Gastrocnemius medialis (tissue), 4 donors: ENCODE measurements at regions of chr2 and their contacts with region 1.

Region 1: GRCh38 chr2:219402665-219403515 is 15.2 kb upstream of the DNPEP start:
- DNase-seq: peak; percentile 61 to 79
- ATAC-seq: peak; percentile 6 to 18
- H3K4me3 ChIP-seq: no peak overlapping the region
- H3K27ac ChIP-seq: peak overlapping the region; percentile 92 to 99 (median 98)
- H3K4me1 ChIP-seq: peaks cover 50 to 83% of the 10 kb centered on the region in 2 donors
- H3K27me3 ChIP-seq: no peaks in the 10 kb centered on the region
- CTCF ChIP-seq: peak; percentile 91 to 94 (median 93)
- POLR2A ChIP-seq: no peak

Region 2: DNA sequence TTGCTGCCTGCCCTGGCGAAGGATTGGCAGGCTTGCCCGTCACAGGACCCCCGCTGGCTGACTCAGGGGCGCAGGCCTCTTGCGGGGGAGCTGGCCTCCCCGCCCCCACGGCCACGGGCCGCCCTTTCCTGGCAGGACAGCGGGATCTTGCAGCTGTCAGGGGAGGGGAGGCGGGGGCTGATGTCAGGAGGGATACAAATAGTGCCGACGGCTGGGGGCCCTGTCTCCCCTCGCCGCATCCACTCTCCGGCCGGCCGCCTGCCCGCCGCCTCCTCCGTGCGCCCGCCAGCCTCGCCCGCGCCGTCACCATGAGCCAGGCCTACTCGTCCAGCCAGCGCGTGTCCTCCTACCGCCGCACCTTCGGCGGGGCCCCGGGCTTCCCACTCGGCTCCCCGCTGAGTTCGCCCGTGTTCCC is 15.3 kb after region 1 on chr2 and contains the start of gene DES:
- in situ Hi-C with region 1: no loop called
- intact Hi-C with region 1: loop called (anchors 1 kb)
- DNase-seq: peak; percentile 87 to 94
- ATAC-seq: peak; percentile 47 to 55
- H3K4me3 ChIP-seq: peak within 1 kb of the TSS; percentile 75 to 95 (median 83)
- H3K27ac ChIP-seq: peak within 1 kb of the TSS; percentile 95 to 100 (median 98)
- H3K4me1 ChIP-seq: peaks cover 52 to 62% of the 10 kb centered on the region in 2 donors
- H3K27me3 ChIP-seq: no peaks in the 10 kb centered on the region
- CTCF ChIP-seq: no peak
- POLR2A ChIP-seq: peak; percentile 94 to 98
- total RNA-seq, gene DES: 19,008 to 28,635 (median 23,575) TPM

Region 3: DNA sequence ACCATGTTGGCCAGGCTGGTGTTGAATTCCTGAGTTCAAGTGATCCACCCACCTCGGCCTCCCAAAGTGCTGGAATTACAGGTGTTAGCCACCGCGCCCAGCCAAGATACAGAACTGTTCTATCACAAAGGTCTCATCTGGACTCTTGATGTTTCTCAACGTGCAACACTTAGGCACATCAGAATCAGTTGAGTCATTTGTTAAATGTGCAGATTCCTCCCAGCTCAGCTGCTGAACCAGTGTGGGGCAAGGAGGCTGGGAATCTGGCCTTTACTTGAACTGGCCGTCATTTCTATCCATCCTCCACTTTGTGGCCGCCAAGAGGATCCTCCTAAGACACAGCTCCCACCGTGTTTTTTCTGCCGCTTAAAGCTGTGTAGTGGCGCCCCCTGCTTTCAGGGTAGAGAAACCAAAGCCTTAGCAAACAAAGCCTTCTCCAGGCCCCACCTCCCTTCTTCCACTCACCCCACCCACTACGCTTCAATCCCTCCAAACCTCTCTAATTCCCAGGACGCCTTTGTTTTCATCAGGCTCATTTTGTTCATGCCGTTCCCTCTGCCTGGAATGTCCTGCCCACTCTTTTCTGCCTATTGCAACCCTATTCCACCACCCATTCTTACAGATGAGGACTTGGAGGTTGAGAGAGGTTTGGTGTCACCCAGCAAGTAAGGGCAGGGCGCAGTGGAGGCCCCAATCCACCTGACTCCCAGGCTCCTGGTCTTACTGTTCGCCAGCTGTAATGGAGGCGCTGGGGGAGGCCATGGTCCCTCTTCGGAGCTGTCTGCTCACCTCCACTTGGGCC is 31.0 kb after region 1 on chr2:
- in situ Hi-C with region 1: no loop called
- intact Hi-C with region 1: loop called (anchors 1 kb)
- DNase-seq: peak; percentile 56 to 89
- ATAC-seq: peak; percentile 45 to 53
- H3K4me3 ChIP-seq: peak overlapping the region; percentile 62 to 78 (median 68)
- H3K27ac ChIP-seq: peak overlapping the region; percentile 95 to 100 (median 98)
- H3K4me1 ChIP-seq: peaks cover 55 to 64% of the 10 kb centered on the region in 2 donors
- H3K27me3 ChIP-seq: no peaks in the 10 kb centered on the region
- CTCF ChIP-seq: peak; percentile 43 to 79 (median 54)
- POLR2A ChIP-seq: no peak

Region 4: DNA sequence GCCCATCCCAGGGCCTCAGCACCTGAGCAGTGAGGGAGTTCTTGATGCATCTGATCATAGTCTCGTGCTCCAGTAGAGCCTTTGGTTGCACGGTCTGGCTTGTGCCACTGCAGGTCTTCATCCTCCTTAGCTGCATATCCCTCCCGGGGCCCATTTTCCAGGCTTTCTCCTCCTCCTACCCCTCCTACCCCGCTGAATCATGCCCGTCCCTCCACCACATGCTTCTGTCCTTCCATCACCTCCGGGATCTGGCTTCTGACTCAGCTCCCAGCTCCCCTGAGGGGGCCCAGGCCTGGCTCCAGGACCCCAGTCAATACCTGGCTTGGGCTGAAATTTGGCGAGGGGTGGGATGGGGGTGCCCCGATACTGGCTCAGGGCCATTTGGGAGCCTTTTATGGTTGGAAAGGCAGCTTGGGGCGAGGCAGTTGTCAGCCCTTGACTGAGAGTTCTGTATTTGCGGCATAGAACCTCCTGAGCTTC is 50.0 kb after region 1 on chr2:
- in situ Hi-C with region 1: loop called in 2 of 4 experiments (anchors 10 kb)
- intact Hi-C with region 1: loop called (anchors 1 kb)
- DNase-seq: peak in 1 of 2 donors; percentile 80
- ATAC-seq: peak; percentile 5 to 38
- H3K4me3 ChIP-seq: peak overlapping the region in 2 of 4 donors; percentile 14 to 15
- H3K27ac ChIP-seq: peak overlapping the region; percentile 95 to 99 (median 97)
- H3K4me1 ChIP-seq: peaks cover 59 to 62% of the 10 kb centered on the region in 2 donors
- H3K27me3 ChIP-seq: no peaks in the 10 kb centered on the region
- CTCF ChIP-seq: no peak
- POLR2A ChIP-seq: no peak

Region 5: GRCh38 chr2:219459460-219460311 is 56.8 kb after region 1 on chr2:
- in situ Hi-C with region 1: loop called in 2 of 4 experiments (anchors 10 kb)
- intact Hi-C with region 1: no loop called
- DNase-seq: peak; percentile 59 to 89
- ATAC-seq: peak; percentile 67 to 71
- H3K4me3 ChIP-seq: peak overlapping the region in 2 of 4 donors; percentile 32 to 43
- H3K27ac ChIP-seq: peak overlapping the region; percentile 95 to 99 (median 97)
- H3K4me1 ChIP-seq: peaks cover 47 to 49% of the 10 kb centered on the region in 2 donors
- H3K27me3 ChIP-seq: no peaks in the 10 kb centered on the region
- CTCF ChIP-seq: peak; percentile 87 to 96 (median 90)
- POLR2A ChIP-seq: no peak

Region 6: DNA sequence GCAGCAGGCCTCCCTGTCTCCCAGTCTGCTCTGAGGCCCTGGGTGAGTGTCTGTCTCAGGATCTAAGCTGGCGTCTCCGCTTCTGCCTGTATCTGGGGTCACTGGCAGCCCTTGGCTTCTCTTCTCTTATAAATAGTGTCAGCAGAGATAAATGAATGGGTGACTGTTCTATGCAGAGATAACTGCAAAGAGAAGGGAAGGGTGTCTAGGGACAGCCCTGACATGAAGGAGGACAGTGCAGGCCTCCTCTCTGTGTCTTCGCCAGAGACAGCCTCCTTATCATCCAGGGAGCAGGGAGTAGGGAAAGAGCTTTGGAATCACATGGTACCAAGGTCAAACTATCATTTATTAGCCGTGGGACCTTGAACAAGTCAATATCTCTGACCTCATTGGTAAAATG is 67.5 kb after region 1 on chr2:
- in situ Hi-C with region 1: no loop called
- intact Hi-C with region 1: no loop called
- DNase-seq: no peak
- ATAC-seq: no peak
- H3K4me3 ChIP-seq: no peak overlapping the region
- H3K27ac ChIP-seq: peak overlapping the region in 1 of 4 donors; percentile 54
- H3K4me1 ChIP-seq: no peaks in the 10 kb centered on the region
- H3K27me3 ChIP-seq: no peaks in the 10 kb centered on the region
- CTCF ChIP-seq: no peak
- POLR2A ChIP-seq: no peak

Region 7: DNA sequence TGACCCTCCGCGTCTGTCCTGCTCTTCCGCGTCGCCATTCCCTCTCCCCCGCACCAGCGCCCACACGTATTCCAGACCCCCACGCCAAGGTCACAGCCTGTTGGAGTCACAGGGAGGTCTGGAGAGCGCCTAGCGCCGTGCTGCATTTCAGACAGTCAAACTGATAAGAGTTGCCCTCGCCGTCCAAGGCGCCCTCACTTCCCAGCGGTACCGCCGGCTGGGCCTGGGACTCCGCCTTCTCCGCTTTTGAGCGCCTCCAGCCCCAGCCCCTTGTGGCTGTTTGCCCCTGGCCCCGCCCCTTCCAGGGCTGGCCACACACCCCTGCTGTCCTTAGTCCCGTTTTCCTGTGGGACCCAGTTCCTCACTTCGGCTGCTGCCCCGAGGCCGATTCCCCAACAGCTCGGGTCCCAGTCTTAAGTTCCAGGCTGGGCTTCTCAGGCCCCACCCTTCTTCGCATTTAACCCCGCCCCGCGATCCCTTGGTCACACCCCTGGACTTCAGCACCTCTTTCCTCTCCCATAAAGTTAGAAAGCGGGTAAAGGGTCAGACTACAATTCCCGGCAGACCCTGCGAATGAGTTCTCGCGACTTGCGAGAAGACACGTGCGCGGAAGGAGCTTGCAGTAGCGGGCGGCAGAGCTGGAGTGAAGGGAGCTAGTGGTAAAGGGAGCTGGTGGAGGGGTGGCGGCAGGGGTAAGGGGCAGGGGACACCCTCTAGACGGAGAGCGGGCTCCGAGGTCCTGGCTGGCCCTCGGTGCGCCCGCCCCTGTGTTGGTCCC is 95.6 kb after region 1 on chr2 and contains the start of gene GMPPA:
- in situ Hi-C with region 1: no loop called
- intact Hi-C with region 1: loop called (anchors 1 kb)
- DNase-seq: peak; percentile 97 to 98
- ATAC-seq: peak; percentile 82 to 88
- H3K4me3 ChIP-seq: peak within 1 kb of the TSS; percentile 66 to 87 (median 74)
- H3K27ac ChIP-seq: peak within 1 kb of the TSS; percentile 91 to 100 (median 96)
- H3K4me1 ChIP-seq: peaks cover 39 to 46% of the 10 kb centered on the region in 2 donors
- H3K27me3 ChIP-seq: no peaks in the 10 kb centered on the region
- CTCF ChIP-seq: peak in 1 of 5 experiments; percentile 25
- POLR2A ChIP-seq: peak; percentile 83 to 89
- total RNA-seq, gene GMPPA: 18.0 to 25.8 (median 24.4) TPM

Region 8: GRCh38 chr2:219642465-219643080 is 239.7 kb after region 1 on chr2:
- in situ Hi-C with region 1: no loop called
- intact Hi-C with region 1: loop called (anchors 5 kb)
- DNase-seq: peak; percentile 92 to 94
- ATAC-seq: peak; percentile 84 to 86
- H3K4me3 ChIP-seq: no peak overlapping the region
- H3K27ac ChIP-seq: no peak overlapping the region
- H3K4me1 ChIP-seq: peaks cover 27 to 40% of the 10 kb centered on the region in 2 donors
- H3K27me3 ChIP-seq: no peaks in the 10 kb centered on the region
- CTCF ChIP-seq: peak; percentile 96 to 100 (median 99)
- POLR2A ChIP-seq: no peak